Mammary epithelial cell (primary cell): ENCODE measurements at regions of chr1 and their contacts with region 1.

Region 1: DNA sequence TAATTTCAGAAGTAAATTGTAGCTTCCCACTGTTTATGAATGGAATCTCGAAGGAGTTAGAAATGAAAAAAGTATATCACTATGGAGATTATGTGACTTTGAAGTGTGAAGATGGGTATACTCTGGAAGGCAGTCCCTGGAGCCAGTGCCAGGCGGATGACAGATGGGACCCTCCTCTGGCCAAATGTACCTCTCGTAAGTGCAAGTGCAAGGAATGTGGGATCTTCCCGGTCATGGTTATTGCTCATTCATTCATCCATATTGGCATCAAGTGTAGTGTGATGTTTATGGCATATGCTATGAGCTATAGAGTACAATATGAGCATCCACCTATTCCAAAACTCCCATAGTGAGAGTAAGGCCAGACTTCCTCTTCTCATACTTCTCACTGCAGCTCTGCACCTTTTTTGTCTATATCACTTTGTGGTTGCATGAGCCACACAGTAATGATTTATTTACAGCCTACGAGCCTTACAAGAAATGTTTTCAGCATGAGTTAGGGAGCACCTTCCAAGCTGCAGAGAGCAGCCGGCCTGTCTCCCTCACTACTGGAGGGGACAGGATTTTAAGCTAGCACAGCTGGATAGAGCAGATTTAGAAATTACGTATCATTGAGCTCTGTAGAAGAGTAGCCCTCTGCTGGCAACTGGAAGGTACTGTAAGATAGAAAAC is 24.9 kb upstream of the CR1L start:
- DNase-seq: peak; percentile 39
- H3K4me3 ChIP-seq: no peak overlapping the region
- H3K27ac ChIP-seq: no peak overlapping the region
- H3K4me1 ChIP-seq: no peaks in the 10 kb centered on the region
- H3K27me3 ChIP-seq: peaks cover 3% of the 10 kb centered on the region
- CTCF ChIP-seq: peak; percentile 80 to 82

Region 2: DNA sequence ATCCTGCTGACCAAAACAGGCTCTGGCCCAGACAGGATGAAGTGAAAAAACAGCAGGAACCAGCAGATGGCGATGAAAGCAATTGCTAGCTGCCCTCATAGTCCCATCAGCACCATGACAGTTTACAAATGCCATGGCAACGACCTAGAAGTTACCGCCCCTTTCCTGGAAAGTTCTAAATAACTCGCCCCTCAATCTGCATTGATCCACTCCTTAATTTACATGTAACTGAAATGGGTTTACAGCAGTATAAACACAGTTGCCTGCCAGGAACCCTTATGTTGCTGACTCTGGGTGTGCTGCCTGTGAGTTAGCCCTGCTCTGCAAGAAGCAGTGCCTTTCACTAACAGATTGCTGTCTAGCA is 40.6 kb before region 1 on chr1:
- CTCF ChIA-PET with region 1: interaction called, 10 read pairs
- dilution Hi-C with region 1: no loop called
- in situ Hi-C with region 1: no loop called
- intact Hi-C with region 1: loop called (anchors 1 kb)
- DNase-seq: peak; percentile 54
- H3K4me3 ChIP-seq: no peak overlapping the region
- H3K27ac ChIP-seq: no peak overlapping the region
- H3K4me1 ChIP-seq: no peaks in the 10 kb centered on the region
- H3K27me3 ChIP-seq: no peaks in the 10 kb centered on the region
- CTCF ChIP-seq: peak; percentile 47 to 70

Region 3: DNA sequence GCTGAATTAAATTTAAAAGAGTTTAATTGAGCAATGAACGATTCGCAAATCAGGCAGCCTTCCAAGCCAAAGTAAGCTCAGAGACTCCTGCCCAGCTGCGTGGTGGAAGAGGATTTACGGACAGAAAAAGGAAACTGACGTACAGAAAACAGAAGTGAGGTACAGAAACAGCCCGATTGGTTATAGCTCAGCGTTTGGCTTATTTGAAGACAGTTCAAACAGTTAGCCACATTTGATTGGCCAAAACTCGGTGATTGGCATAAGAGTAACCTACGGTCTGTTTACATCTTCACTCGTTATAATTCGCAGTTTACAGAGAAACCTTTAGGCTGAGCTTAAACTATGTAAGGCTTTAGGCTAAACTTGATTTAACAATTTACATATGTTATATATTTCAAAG is 71.8 kb after region 1 on chr1:
- CTCF ChIA-PET with region 1: no interaction called
- dilution Hi-C with region 1: no loop called
- in situ Hi-C with region 1: no loop called
- intact Hi-C with region 1: no loop called
- DNase-seq: no peak
- H3K4me3 ChIP-seq: no peak overlapping the region
- H3K27ac ChIP-seq: no peak overlapping the region
- H3K4me1 ChIP-seq: no peaks in the 10 kb centered on the region
- H3K27me3 ChIP-seq: no peaks in the 10 kb centered on the region
- CTCF ChIP-seq: no peak